Activated CD4-positive, alpha-beta memory T cell treated with anti-CD3 and anti-CD28 coated beads for 36 hours (primary cell): ENCODE measurements at regions of chr9 and their contacts with region 1.

Region 1: GRCh38 chr9:104968025-104968982 is 40.3 kb upstream of the ABCA1 start:
- DNase-seq: peak; percentile 92
- H3K4me3 Mint-ChIP-seq: peak overlapping the region; percentile 89
- H3K27ac Mint-ChIP-seq: peak overlapping the region; percentile 84
- H3K4me1 Mint-ChIP-seq: peaks cover 10% of the 10 kb centered on the region
- H3K27me3 Mint-ChIP-seq: peaks cover 15% of the 10 kb centered on the region

Region 2: DNA sequence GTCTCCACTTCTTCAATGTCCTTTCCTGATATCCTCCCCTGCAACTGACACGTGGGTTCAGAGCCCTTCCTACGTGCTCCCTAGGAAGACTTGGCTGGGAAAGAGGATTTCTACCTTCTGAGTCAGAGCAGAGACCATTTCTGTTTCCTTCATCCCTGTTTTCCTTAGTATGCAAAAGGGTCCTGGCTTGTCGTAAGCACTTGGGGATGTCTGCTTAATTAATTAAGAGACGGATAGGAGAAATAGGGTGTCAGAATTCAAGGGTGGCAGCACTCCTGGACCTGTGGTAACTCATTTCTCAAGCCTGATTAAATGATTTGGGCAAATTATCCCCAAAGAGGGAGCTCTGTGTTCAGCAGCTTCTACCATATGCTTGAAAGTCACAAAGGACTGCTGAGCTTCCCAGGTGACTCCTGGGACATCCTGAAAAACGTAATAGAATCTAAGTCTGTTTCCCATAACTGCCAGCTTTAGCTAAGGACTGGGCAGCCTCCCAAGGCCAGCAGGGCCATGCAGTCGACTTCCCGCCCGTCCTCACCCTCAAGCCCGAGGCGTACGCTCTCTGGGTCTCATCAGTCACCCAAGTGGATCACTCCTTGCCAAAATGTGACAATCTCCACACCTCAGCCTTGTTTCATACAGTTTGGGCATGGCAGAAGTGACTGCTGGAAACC is 60.9 kb before region 1 on chr9:
- CTCF ChIA-PET with region 1: no interaction called
- POLR2A ChIA-PET with region 1: no interaction called
- intact Hi-C with region 1: no loop called
- DNase-seq: no peak
- H3K4me3 Mint-ChIP-seq: no peak overlapping the region
- H3K27ac Mint-ChIP-seq: no peak overlapping the region
- H3K4me1 Mint-ChIP-seq: peaks cover 2% of the 10 kb centered on the region
- H3K27me3 Mint-ChIP-seq: no peaks in the 10 kb centered on the region

Region 3: DNA sequence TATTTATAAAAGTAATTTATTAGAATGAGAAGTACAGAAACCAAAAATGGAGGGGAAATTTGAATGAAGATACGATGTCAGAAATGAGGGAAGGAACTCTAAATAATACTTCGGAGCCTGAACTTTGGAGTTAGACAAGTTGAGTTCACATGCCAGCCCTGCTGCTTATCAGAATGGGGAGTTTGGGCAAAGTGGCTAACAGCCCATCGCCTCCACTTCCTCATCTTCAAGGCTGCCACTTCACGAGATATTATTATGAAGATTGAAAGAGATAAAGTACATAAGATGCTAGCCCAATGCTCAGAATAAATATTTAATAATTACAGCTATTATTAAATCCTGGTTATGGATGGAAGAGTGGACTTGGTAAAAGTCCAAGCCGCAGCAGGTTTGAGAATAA is 15.8 kb after region 1 on chr9:
- CTCF ChIA-PET with region 1: interaction called, 4 read pairs
- POLR2A ChIA-PET with region 1: interaction called, 7 read pairs
- intact Hi-C with region 1: loop called (anchors 1 kb)
- DNase-seq: no peak
- H3K4me3 Mint-ChIP-seq: no peak overlapping the region
- H3K27ac Mint-ChIP-seq: peak overlapping the region; percentile 68
- H3K4me1 Mint-ChIP-seq: peaks cover 42% of the 10 kb centered on the region
- H3K27me3 Mint-ChIP-seq: peaks cover 25% of the 10 kb centered on the region

Region 4: DNA sequence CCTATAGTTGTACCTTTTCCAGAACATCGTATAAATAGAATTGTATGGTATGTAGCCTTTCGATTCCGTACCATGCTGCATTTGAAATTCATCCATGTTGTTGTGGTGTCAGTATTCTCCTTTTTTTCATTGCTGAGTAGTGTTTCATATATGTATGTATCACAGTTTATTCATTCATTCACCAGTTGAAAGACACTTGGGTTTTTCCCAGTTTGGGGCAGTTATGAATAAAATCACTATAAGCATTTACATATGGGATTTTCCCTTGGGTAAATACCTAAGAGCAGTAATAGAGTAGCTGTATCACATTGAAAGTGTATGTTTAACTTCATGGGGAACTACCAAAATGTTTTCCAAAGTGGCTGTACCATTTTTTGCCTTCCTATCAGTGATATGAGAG is 573.5 kb after region 1 on chr9:
- CTCF ChIA-PET with region 1: no interaction called
- POLR2A ChIA-PET with region 1: no interaction called
- intact Hi-C with region 1: no loop called
- DNase-seq: no peak
- H3K4me3 Mint-ChIP-seq: no peak overlapping the region
- H3K27ac Mint-ChIP-seq: peak overlapping the region; percentile 24
- H3K4me1 Mint-ChIP-seq: peaks cover 9% of the 10 kb centered on the region
- H3K27me3 Mint-ChIP-seq: no peaks in the 10 kb centered on the region